ENCODE measurements at regions of chr16 and their contacts with region 1.

Region 1: GRCh38 chr16:25896412-25896811 is 204.7 kb downstream of the HS3ST4 start:
- DNase-seq: no peak
- ATAC-seq: no peak
- H3K4me3 ChIP-seq: no peak overlapping the region
- H3K27ac ChIP-seq: no peak overlapping the region
- H3K4me1 ChIP-seq: no peaks in the 10 kb centered on the region
- H3K27me3 ChIP-seq: peaks cover 0 to 14% (median 3%) of the 10 kb centered on the region in 7 donors
- CTCF ChIP-seq: no peak

Region 2: DNA sequence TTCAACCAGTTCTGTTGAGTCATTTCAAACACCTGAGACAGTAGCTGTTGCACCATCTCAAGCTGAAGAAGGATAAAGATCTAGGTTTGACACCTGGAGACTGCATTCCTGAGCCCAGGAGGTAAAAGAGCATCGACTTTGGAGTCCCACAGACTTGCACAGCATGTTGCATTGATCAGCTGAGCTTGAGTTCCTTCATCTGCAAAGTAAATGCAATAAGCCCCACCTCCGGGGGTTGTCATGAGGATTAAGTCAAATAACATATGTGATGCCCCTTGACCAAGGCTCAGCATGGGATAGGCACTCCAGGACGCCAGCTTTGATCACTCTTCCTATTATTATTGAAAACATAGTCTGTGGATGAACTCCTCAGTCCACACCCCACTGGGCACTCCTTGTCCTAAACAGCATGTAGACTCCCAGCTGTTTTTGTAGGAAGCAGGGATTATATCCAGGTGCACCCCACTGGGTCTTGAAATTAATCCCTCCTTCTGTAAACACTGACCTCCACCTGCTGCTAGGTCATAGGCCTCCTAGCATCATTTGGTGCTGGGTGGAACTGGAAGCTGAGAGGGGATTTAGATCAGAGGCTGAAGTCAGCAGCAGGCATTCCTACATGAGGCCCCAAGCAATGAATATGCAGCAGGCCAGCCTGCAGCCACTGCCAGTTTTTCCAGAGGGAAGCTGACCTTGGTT is 54.3 kb after region 1 on chr16:
- intact Hi-C with region 1: loop called in 1 of 10 experiments (anchors 10 kb)
- DNase-seq: no peak
- ATAC-seq: no peak
- H3K4me3 ChIP-seq: no peak overlapping the region
- H3K27ac ChIP-seq: no peak overlapping the region
- H3K4me1 ChIP-seq: no peaks in the 10 kb centered on the region
- H3K27me3 ChIP-seq: peaks cover 0 to 9% (median 0%) of the 10 kb centered on the region in 7 donors
- CTCF ChIP-seq: no peak

Measured in heart right ventricle (tissue), 16 donors.